Endothelial cell of umbilical vein (primary cell): ENCODE measurements at regions of chr15 and their contacts with region 1.

Region 1: GRCh38 chr15:40941528-40942336 is 11.5 kb upstream of the CHAC1 start:
- DNase-seq: peak; percentile 88
- H3K4me3 ChIP-seq: peak overlapping the region; percentile 24 to 46 (median 37)
- H3K27ac ChIP-seq: peak overlapping the region; percentile 80
- H3K4me1 ChIP-seq: peaks cover 31% of the 10 kb centered on the region
- H3K27me3 ChIP-seq: no peaks in the 10 kb centered on the region
- CTCF ChIP-seq: peak; percentile 41 to 76
- POLR2A ChIP-seq: peak; percentile 44

Region 2: DNA sequence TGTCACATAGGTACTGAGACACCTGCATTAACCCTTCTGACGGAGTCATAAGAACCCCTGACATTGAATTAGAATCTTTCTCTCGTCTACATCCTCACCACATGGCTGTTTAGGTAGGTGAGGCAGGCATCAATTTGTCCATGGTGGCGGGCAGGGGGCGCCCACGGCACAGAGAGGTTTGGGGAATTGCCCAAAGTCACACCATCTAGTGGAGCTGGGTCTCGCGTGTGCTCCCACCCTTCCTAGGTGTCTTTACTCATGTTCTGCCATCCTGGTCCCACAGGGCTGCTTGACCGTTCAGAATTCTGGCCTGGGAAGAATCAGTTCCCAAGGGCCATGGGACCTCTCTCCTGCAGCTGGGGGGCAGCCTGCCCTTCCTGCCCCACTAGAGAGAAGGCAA is 27.2 kb before region 1 on chr15:
- CTCF ChIA-PET with region 1: interaction called, 16 read pairs
- POLR2A ChIA-PET with region 1: interaction called, 4 read pairs
- dilution Hi-C with region 1: no loop called
- intact Hi-C with region 1: loop called (anchors 1 kb)
- DNase-seq: no peak
- H3K4me3 ChIP-seq: no peak overlapping the region
- H3K27ac ChIP-seq: peak overlapping the region; percentile 69
- H3K4me1 ChIP-seq: peaks cover 41% of the 10 kb centered on the region
- H3K27me3 ChIP-seq: no peaks in the 10 kb centered on the region
- CTCF ChIP-seq: no peak
- POLR2A ChIP-seq: no peak

Region 3: DNA sequence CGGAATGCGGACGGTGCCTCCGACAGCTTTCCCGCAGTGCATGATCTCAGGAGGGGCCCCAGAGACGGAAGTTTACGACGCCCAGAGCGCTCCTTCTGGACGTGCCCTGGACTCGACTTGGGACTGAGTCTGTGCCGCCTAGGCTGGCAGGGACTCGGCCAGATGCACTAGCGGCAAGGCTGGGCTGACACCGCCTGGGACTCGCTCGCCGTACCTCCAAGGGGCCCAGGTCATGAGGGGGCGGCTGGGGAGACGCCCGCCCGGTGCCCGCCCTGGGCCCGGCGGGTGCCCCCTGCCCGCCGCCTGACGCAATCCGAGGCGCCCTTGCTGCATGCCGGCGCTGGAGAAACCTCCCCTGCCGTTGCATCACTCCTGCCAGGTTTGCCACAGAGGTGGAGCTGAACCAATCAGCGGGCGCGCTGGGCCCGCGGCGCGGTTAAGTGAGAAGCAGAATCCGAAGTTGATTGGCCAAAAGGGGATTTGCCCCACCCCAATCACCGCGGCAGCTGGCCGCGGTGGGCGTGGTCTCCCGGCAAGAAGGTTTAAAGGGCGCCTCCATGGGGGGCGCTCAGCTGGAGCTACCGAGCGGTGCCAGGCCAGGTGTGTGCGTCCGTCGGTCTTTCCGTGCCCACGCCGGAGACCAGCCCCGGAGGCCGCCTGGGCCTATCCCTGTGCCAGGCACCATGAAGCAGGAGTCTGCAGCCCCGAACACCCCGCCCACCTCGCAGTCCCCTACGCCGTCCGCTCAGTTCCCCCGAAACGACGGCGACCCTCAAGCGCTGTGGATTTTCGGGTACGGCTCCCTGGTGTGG is 11.4 kb after region 1 on chr15 and contains the start of gene CHAC1:
- CTCF ChIA-PET with region 1: interaction called, 101 read pairs
- POLR2A ChIA-PET with region 1: interaction called, 19 read pairs
- dilution Hi-C with region 1: no loop called
- intact Hi-C with region 1: loop called (anchors 1 kb)
- DNase-seq: peak; percentile 98
- H3K4me3 ChIP-seq: peak within 1 kb of the TSS; percentile 32 to 90 (median 37)
- H3K27ac ChIP-seq: peak within 1 kb of the TSS; percentile 61
- H3K4me1 ChIP-seq: peaks cover 10% of the 10 kb centered on the region
- H3K27me3 ChIP-seq: no peaks in the 10 kb centered on the region
- CTCF ChIP-seq: peak in 1 of 2 donors; percentile 9
- POLR2A ChIP-seq: peak; percentile 77
- total RNA-seq, gene CHAC1: 4.6 and 5.6 TPM in 2 replicates

Region 4: GRCh38 chr15:40982855-40983254 is 41.1 kb after region 1 on chr15:
- CTCF ChIA-PET with region 1: interaction called, 57 read pairs
- POLR2A ChIA-PET with region 1: interaction called, 6 read pairs
- dilution Hi-C with region 1: no loop called
- intact Hi-C with region 1: loop called (anchors 1 kb)
- DNase-seq: peak; percentile 93
- H3K4me3 ChIP-seq: peak overlapping the region in 1 of 3 experiments; percentile 23
- H3K27ac ChIP-seq: peak overlapping the region; percentile 94
- H3K4me1 ChIP-seq: peaks cover 40% of the 10 kb centered on the region
- H3K27me3 ChIP-seq: no peaks in the 10 kb centered on the region
- CTCF ChIP-seq: peak; percentile 12 to 42
- POLR2A ChIP-seq: peak; percentile 57

Region 5: DNA sequence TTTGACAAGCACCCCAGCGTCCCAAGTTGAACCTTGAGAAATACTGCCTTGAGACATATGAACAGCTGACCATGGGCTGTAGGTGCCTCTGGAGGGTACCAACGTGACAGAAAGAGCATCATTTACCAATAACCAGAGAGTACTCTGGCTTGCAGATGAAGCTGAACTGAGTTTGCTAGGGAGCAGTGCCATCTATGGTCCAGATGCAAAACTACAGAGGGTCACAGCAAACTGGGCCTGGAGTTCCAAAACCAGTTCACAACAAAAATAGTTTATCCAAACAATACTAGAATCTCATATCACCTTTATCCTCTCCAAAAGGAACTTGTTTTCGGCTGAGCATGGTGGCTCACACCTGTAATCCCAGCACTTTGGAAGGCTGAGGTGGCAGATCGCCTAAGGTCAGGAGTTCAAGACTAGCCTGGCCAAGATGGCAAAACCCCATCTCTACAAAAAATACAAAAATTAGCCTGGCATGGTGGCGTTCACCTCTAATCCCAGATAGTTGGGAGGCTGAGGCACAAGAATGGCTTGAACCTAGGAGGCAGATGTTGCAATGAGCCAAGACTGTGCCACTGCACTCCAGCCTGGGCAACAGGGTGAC is 80.9 kb after region 1 on chr15:
- CTCF ChIA-PET with region 1: interaction called, 303 read pairs
- POLR2A ChIA-PET with region 1: interaction called, 19 read pairs
- dilution Hi-C with region 1: no loop called
- intact Hi-C with region 1: loop called (anchors 1 kb)
- DNase-seq: peak; percentile 80
- H3K4me3 ChIP-seq: no peak overlapping the region
- H3K27ac ChIP-seq: no peak overlapping the region
- H3K4me1 ChIP-seq: peaks cover 32% of the 10 kb centered on the region
- H3K27me3 ChIP-seq: no peaks in the 10 kb centered on the region
- CTCF ChIP-seq: peak; percentile 67 to 73
- POLR2A ChIP-seq: no peak

Region 6: GRCh38 chr15:41180206-41180789 is 238.6 kb after region 1 on chr15:
- CTCF ChIA-PET with region 1: interaction called, 12 read pairs
- POLR2A ChIA-PET with region 1: no interaction called
- dilution Hi-C with region 1: no loop called
- intact Hi-C with region 1: loop called (anchors 2 kb)
- DNase-seq: no peak
- H3K4me3 ChIP-seq: no peak overlapping the region
- H3K27ac ChIP-seq: no peak overlapping the region
- H3K4me1 ChIP-seq: no peaks in the 10 kb centered on the region
- H3K27me3 ChIP-seq: no peaks in the 10 kb centered on the region
- CTCF ChIP-seq: no peak
- POLR2A ChIP-seq: no peak